Mucosa of descending colon (tissue), 3 donors: ENCODE measurements at regions of chr22 and their contacts with region 1.

Region 1: DNA sequence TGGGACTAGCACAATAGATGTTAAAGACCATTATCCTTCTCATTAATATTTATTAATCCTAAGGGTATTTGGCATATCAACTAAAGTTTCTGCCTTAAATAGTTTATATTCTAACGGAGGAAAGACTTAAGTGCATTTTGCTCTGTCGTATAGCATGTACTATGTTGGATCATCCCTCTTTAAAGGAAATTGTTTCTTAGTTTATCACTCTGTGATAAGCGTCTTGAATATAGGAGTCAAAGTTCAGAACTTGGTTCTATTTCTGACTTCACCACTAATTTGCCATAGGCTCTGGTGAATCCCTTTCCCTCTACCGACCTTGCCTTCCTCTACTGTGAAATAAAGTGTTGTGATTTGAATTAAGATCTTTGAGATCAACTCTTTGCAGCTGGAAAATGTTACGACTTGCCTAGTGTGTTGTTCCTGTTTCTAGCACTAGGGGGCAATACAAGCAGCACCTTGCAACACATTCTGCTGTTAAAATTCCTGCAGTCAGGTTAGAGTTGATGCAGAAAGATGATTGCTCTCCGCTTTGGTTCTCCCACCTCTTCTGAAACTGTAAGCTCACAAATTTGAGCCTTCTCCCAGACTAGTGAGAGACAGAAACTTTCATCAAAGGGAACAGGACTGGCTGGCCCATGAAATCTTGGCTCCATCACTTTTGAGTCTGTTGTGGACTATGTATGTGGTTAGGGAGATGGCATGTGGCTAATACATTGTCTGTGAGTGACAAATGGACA is 27.8 kb upstream of the ZNRF3 start:
- DNase-seq: peak in 1 of 3 donors; percentile 79
- ATAC-seq: peak; percentile 91
- H3K4me3 ChIP-seq: no peak overlapping the region
- H3K4me1 ChIP-seq: peaks cover 3% of the 10 kb centered on the region
- CTCF ChIP-seq: peak; percentile 84

Region 2: GRCh38 chr22:29040385-29041275 is 185.1 kb after region 1 on chr22:
- intact Hi-C with region 1: loop called (anchors 5 kb)
- DNase-seq: peak in 1 of 3 donors; percentile 78
- ATAC-seq: peak; percentile 83
- H3K4me3 ChIP-seq: no peak overlapping the region
- H3K4me1 ChIP-seq: peaks cover 17% of the 10 kb centered on the region
- CTCF ChIP-seq: peak; percentile 94

Region 3: DNA sequence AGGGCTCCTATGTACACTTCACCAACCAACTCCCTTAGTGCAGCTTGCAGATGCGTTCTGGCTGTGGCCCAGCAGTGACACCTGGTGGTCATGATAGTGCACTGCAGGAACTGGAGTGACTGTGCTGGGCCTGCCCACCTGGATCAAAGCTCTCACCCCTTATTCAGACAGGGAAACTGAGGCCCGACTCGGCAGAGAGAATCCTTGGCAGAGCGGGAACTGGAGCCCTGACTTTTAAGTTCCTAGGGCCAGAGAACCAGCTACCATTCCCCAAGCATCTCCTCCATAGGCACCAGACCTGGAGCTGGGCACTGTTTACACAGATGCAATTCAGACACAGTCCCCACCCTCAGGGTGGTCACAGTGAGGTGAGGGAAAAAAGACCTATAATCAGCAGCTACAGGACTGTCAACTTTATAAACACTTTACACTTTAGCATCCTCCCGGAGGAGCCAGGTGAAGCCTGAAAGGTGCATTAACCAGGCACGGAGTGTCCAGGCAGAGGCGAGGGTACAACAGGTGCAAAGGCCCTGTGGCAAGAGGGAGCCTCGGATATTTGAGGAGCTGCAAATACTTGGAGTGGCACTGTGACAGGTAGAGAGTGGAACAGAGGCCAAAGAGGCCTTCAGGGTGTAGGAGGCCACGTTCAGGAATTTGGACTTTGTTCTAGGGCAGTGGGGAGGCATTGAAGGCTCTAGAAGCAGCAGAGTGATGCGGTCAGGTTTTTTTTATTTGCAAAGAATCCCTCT is 390.3 kb after region 1 on chr22:
- intact Hi-C with region 1: loop called in 1 of 2 experiments (anchors 10 kb)
- DNase-seq: peak; percentile 61 to 73 (median 72)
- ATAC-seq: peak; percentile 97
- H3K4me3 ChIP-seq: no peak overlapping the region
- H3K4me1 ChIP-seq: no peaks in the 10 kb centered on the region
- CTCF ChIP-seq: peak; percentile 96